Vagina (tissue), 2 donors: ENCODE measurements at regions of chr1 and their contacts with region 1.

Region 1: GRCh38 chr1:155323798-155324610 is 3.3 kb downstream of the RUSC1 start:
- DNase-seq: peak in 1 of 2 donors; percentile 99
- H3K4me3 ChIP-seq: peak overlapping the region; percentile 71 to 94
- H3K27ac ChIP-seq: peak overlapping the region; percentile 99
- H3K4me1 ChIP-seq: peaks cover 56% of the 10 kb centered on the region
- H3K27me3 ChIP-seq: no peaks in the 10 kb centered on the region
- CTCF ChIP-seq: no peak
- POLR2A ChIP-seq: peak in 1 of 2 donors; percentile 62

Region 2: DNA sequence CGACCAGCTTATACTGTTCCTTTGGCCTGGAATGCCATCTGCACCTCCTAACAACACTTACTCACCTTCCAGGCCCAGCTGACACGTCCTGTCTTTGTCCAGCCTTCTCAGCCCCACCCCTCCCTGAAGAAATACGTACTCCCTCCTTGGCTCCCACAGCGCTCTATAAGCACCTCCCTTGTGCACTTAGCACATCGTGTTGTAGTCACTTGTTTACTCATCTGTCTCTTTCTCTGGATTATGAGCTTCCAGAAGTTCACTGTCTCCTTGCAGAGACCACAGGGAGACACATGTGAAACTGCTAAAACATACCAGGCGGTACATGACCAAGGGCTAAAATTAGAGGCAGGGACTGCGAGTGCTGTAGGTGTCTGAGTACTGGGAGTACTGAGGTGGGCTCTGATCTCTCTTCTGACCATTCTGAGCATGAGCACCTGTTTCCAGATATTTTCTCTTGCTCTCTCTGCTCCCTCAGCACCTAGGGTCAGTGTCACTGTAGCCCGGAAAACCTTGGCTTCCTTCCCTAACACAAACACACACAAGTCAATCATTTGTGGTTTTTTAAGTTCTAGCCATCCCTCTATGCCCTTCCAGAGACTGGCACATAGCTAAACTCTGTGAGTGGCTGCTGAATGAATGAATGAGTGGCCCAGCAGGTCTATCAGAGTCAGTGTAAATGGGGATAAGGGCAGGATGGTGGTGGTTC is 285.2 kb before region 1 on chr1:
- intact Hi-C with region 1: no loop called
- DNase-seq: no peak
- H3K4me3 ChIP-seq: no peak overlapping the region
- H3K27ac ChIP-seq: peak overlapping the region; percentile 79
- H3K4me1 ChIP-seq: peaks cover 30% of the 10 kb centered on the region
- H3K27me3 ChIP-seq: no peaks in the 10 kb centered on the region
- CTCF ChIP-seq: no peak
- POLR2A ChIP-seq: no peak

Region 3: DNA sequence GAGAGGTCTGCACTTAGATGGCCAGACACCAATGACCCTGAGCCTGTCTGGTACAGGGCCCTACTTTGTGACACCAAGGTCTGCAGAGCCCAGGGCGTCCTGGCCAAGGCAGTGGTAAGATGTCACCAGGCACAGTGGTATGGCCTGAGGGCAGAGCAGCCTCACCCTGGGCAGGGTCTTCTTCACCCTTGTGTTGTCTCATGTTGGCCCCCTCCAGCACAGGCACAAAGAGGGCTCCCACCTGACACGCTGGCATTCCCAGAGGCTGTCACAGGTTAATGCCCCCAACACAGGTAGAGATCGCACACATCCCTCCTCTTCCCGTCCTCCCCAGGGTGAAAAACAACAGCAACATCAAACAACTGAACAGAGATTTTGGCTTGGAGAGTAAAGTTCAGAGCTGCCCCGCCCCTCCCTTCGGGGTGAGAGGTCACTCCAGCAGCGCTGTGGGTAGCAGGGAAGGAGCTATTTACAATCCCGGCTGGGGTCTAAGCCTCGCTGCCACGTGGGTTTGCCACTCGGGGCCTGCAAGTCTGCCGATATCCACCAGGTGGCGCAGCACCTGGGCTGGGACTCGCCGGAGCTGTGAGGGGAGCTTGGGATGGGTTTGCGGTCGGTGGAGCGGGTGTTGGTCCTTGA is 232.8 kb before region 1 on chr1:
- intact Hi-C with region 1: no loop called
- DNase-seq: no peak
- H3K4me3 ChIP-seq: no peak overlapping the region
- H3K27ac ChIP-seq: no peak overlapping the region
- H3K4me1 ChIP-seq: peaks cover 29% of the 10 kb centered on the region
- H3K27me3 ChIP-seq: no peaks in the 10 kb centered on the region
- CTCF ChIP-seq: peak; percentile 90 to 96 (median 96)
- POLR2A ChIP-seq: no peak

Region 4: GRCh38 chr1:155250633-155251449 is 73.2 kb before region 1 on chr1:
- intact Hi-C with region 1: loop called (anchors 5 kb)
- DNase-seq: no peak
- H3K4me3 ChIP-seq: no peak overlapping the region
- H3K27ac ChIP-seq: peak overlapping the region; percentile 26
- H3K4me1 ChIP-seq: peaks cover 24% of the 10 kb centered on the region
- H3K27me3 ChIP-seq: no peaks in the 10 kb centered on the region
- CTCF ChIP-seq: peak; percentile 99
- POLR2A ChIP-seq: no peak

Region 5: DNA sequence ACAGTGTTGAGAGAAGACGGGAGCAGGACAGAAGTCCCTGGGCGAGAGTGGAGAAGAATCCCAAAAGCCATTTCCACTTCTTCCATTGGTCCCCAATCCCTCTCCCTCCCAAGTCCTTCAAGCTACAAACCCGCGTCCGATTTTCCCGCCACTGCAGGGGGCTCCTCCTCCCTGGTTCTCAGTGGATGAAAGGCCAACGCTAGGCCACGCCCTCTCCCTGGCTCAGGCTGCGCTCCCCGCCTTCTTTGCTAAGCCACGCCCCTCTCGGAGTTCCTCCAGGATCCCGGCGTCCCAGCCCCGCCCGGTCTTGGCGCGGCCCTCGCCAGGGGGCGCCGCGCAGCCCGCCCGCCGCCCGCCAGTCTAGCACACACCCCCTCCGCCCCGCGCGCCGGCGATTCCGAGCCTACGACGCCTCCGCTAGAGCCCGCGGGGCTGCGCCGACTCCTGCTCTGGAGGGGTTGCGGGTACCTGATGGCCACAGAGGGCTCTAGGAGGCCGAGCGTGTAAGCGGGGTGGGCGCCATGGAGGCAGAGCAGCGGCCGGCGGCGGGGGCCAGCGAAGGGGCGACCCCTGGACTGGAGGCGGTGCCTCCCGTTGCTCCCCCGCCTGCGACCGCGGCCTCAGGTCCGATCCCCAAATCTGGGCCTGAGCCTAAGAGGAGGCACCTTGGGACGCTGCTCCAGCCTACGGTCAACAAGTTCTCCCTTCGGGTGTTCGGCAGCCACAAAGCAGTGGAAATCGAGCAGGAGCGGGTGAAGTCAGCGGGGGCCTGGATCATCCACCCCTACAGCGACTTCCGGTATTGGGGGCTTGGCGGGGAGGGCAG is 46.7 kb before region 1 on chr1 and contains the start of gene HCN3:
- intact Hi-C with region 1: loop called (anchors 5 kb)
- DNase-seq: no peak
- H3K4me3 ChIP-seq: peak within 1 kb of the TSS; percentile 59 to 65
- H3K27ac ChIP-seq: peak within 1 kb of the TSS; percentile 61
- H3K4me1 ChIP-seq: peaks cover 28% of the 10 kb centered on the region
- H3K27me3 ChIP-seq: no peaks in the 10 kb centered on the region
- CTCF ChIP-seq: peak; percentile 15 to 69 (median 49)
- POLR2A ChIP-seq: no peak
- total RNA-seq, gene HCN3: 4.2 TPM

Region 6: GRCh38 chr1:155562581-155563376 is 238.8 kb after region 1 on chr1 and contains the start of gene ASH1L:
- intact Hi-C with region 1: loop called (anchors 5 kb)
- DNase-seq: peak; percentile 96 to 97
- H3K4me3 ChIP-seq: peak within 1 kb of the TSS; percentile 81 to 96
- H3K27ac ChIP-seq: peak within 1 kb of the TSS; percentile 98
- H3K4me1 ChIP-seq: peaks cover 43% of the 10 kb centered on the region
- H3K27me3 ChIP-seq: no peaks in the 10 kb centered on the region
- CTCF ChIP-seq: peak in 1 of 3 experiments; percentile 17
- POLR2A ChIP-seq: peak in 1 of 2 donors; percentile 93
- total RNA-seq, gene ASH1L: 74.9 TPM